Stomach (tissue), 19 donors: ENCODE measurements at regions of chr15 and their contacts with region 1.

Region 1: GRCh38 chr15:57146506-57147201 is 228.2 kb downstream of the TCF12 start:
- DNase-seq: peak in 1 of 2 donors; percentile 86
- H3K4me3 ChIP-seq: no peak overlapping the region
- H3K27ac ChIP-seq: peak overlapping the region in 1 of 5 donors; percentile 25
- H3K4me1 ChIP-seq: peaks cover 5 to 45% (median 32%) of the 10 kb centered on the region in 4 donors
- H3K27me3 ChIP-seq: no peaks in the 10 kb centered on the region
- CTCF ChIP-seq: peak in 5 of 7 experiments; percentile 36 to 72 (median 46)
- EP300 ChIP-seq: no peak
- POLR2A ChIP-seq: no peak

Region 2: GRCh38 chr15:57205996-57206395 is 59.3 kb after region 1 on chr15:
- intact Hi-C with region 1: loop called (anchors 10 kb)
- DNase-seq: no peak
- H3K4me3 ChIP-seq: no peak overlapping the region
- H3K27ac ChIP-seq: no peak overlapping the region
- H3K4me1 ChIP-seq: peaks cover 0 to 21% (median 8%) of the 10 kb centered on the region in 4 donors
- H3K27me3 ChIP-seq: no peaks in the 10 kb centered on the region
- CTCF ChIP-seq: no peak
- EP300 ChIP-seq: no peak
- POLR2A ChIP-seq: no peak

Region 3: DNA sequence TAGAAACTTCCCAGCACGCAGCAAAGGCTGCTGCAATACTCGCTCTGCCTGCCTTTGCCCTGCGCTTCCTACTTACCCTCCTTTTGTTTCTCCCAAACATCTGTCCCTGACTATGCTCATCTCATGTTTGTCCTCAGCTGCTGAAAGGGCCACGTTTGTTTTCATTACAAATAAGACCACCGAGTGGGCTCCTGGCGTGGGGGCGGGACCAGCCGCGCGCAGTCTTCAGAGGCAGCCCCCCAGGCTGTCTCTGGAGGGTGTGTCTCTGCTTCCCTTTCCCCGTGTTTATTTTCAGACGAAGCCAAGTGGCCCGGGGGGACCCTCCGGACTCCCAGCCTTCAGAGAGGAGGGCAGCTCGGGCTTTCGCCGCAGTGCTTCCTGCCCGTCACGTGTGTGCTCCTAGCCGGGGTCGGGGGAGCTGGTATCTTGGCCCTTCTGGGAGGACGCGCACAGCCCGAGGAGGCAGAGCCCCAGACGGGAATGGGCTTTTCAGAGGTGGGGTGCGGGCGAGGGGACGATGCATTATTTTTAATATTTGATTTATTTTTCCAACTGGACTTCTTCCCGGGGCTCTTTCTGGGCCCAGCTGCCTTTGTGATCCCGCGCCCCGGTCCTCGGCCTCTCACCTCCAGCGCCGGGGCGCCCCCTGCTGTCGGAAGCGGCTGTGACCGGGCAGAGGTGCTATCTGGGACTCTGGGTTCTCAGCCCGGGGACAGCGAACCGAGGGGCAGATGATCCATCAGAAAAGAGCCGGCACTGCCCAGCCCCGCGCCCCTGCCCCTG is 159.7 kb after region 1 on chr15:
- intact Hi-C with region 1: loop called (anchors 5 kb)
- DNase-seq: peak; percentile 91 to 92
- H3K4me3 ChIP-seq: peak overlapping the region; percentile 50 to 72 (median 56)
- H3K27ac ChIP-seq: peak overlapping the region in 3 of 5 donors; percentile 40 to 54 (median 46)
- H3K4me1 ChIP-seq: peaks cover 14 to 23% (median 20%) of the 10 kb centered on the region in 4 donors
- H3K27me3 ChIP-seq: no peaks in the 10 kb centered on the region
- CTCF ChIP-seq: peak in 5 of 7 experiments; percentile 69 to 88 (median 76)
- EP300 ChIP-seq: no peak
- POLR2A ChIP-seq: no peak